ENCODE measurements at regions of chr10 and their contacts with region 1.

Region 1: GRCh38 chr10:119445311-119445934 is 97.1 kb downstream of the RGS10 start:
- DNase-seq: peak; percentile 75 to 93 (median 82)
- ATAC-seq: peak; percentile 90
- H3K4me3 ChIP-seq: no peak overlapping the region
- H3K4me3 Mint-ChIP-seq: no peak overlapping the region
- H3K27ac ChIP-seq: no peak overlapping the region
- H3K27ac Mint-ChIP-seq: no peak overlapping the region
- H3K4me1 ChIP-seq: peaks cover 9% of the 10 kb centered on the region
- H3K4me1 Mint-ChIP-seq: peaks cover 20% of the 10 kb centered on the region
- H3K27me3 ChIP-seq: no peaks in the 10 kb centered on the region
- H3K27me3 Mint-ChIP-seq: no peaks in the 10 kb centered on the region
- CTCF ChIP-seq: peak; percentile 83

Region 2: GRCh38 chr10:119139464-119140067 is 305.9 kb before region 1 on chr10:
- CTCF ChIA-PET with region 1: no interaction called
- POLR2A ChIA-PET with region 1: no interaction called
- intact Hi-C with region 1: loop called in 1 of 2 experiments (anchors 5 kb)
- DNase-seq: peak; percentile 23 to 72 (median 46)
- ATAC-seq: peak; percentile 88
- H3K4me3 ChIP-seq: no peak overlapping the region
- H3K4me3 Mint-ChIP-seq: no peak overlapping the region
- H3K27ac ChIP-seq: peak overlapping the region in 1 of 2 donors; percentile 11
- H3K27ac Mint-ChIP-seq: peak overlapping the region; percentile 1
- H3K4me1 ChIP-seq: peaks cover 7% of the 10 kb centered on the region
- H3K4me1 Mint-ChIP-seq: peaks cover 7% of the 10 kb centered on the region
- H3K27me3 ChIP-seq: no peaks in the 10 kb centered on the region
- H3K27me3 Mint-ChIP-seq: no peaks in the 10 kb centered on the region
- CTCF ChIP-seq: peak; percentile 48

Region 3: DNA sequence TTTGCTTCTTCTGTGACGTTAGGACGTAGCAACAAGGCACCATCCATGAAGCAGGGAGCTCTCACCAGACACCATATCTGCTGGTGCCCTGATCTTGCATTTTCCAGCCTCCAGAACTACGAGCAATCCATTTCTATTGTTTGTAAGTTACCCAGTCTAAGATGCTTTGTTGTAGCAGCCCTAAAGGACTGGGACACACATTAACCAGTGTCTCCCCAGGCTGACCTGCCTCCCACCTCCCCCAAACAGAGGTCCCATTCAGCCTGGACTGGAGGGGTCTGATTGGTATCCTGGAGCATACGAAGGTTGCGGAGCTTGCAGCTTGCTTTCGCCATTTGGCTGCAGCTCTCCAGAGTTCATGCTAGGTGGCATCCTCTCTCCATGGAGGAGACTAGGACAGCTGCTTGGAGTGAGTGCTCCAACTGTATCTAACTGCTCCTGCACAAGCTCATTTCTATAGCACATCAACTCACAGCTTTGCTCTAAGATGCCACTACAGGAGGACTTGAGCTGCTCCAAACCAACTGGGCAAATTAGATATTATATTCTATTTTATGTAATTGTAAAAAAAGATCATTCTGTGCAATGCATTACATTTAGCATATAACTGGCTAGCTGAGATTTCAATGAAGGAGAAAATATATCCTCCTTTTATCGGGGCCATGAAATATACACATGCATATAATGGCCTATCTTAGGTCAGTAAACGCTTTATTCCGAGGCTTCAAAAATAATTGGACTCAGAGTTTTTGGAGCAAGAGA is 246.0 kb before region 1 on chr10:
- CTCF ChIA-PET with region 1: interaction called, 46 read pairs
- POLR2A ChIA-PET with region 1: no interaction called
- intact Hi-C with region 1: loop called in 1 of 2 experiments (anchors 2 kb)
- DNase-seq: peak in 13 of 14 experiments; percentile 14 to 80 (median 45)
- ATAC-seq: peak; percentile 97
- H3K4me3 ChIP-seq: no peak overlapping the region
- H3K4me3 Mint-ChIP-seq: no peak overlapping the region
- H3K27ac ChIP-seq: no peak overlapping the region
- H3K27ac Mint-ChIP-seq: no peak overlapping the region
- H3K4me1 ChIP-seq: peaks cover 4% of the 10 kb centered on the region
- H3K4me1 Mint-ChIP-seq: peaks cover 5% of the 10 kb centered on the region
- H3K27me3 ChIP-seq: no peaks in the 10 kb centered on the region
- H3K27me3 Mint-ChIP-seq: no peaks in the 10 kb centered on the region
- CTCF ChIP-seq: peak; percentile 70

Region 4: GRCh38 chr10:119494236-119495060 is 49.0 kb after region 1 on chr10:
- CTCF ChIA-PET with region 1: interaction called, 7 read pairs
- POLR2A ChIA-PET with region 1: interaction called, 3 read pairs
- intact Hi-C with region 1: loop called in 1 of 2 experiments (anchors 2 kb)
- DNase-seq: peak in 1 of 14 experiments; percentile 23
- ATAC-seq: no peak
- H3K4me3 ChIP-seq: no peak overlapping the region
- H3K4me3 Mint-ChIP-seq: peak overlapping the region; percentile 57
- H3K27ac ChIP-seq: peak overlapping the region; percentile 33 to 57
- H3K27ac Mint-ChIP-seq: peak overlapping the region; percentile 92
- H3K4me1 ChIP-seq: peaks cover 72% of the 10 kb centered on the region
- H3K4me1 Mint-ChIP-seq: peaks cover 80% of the 10 kb centered on the region
- H3K27me3 ChIP-seq: no peaks in the 10 kb centered on the region
- H3K27me3 Mint-ChIP-seq: no peaks in the 10 kb centered on the region
- CTCF ChIP-seq: no peak

Region 5: GRCh38 chr10:119588071-119588470 is 142.6 kb after region 1 on chr10:
- CTCF ChIA-PET with region 1: no interaction called
- POLR2A ChIA-PET with region 1: no interaction called
- intact Hi-C with region 1: no loop called
- DNase-seq: no peak
- ATAC-seq: no peak
- H3K4me3 ChIP-seq: no peak overlapping the region
- H3K4me3 Mint-ChIP-seq: no peak overlapping the region
- H3K27ac ChIP-seq: no peak overlapping the region
- H3K27ac Mint-ChIP-seq: no peak overlapping the region
- H3K4me1 ChIP-seq: peaks cover 7% of the 10 kb centered on the region
- H3K4me1 Mint-ChIP-seq: peaks cover 44% of the 10 kb centered on the region
- H3K27me3 ChIP-seq: no peaks in the 10 kb centered on the region
- H3K27me3 Mint-ChIP-seq: no peaks in the 10 kb centered on the region
- CTCF ChIP-seq: no peak

Region 6: GRCh38 chr10:121216721-121217181 is 1771.3 kb after region 1 on chr10:
- CTCF ChIA-PET with region 1: no interaction called
- POLR2A ChIA-PET with region 1: no interaction called
- intact Hi-C with region 1: no loop called
- DNase-seq: no peak
- ATAC-seq: no peak
- H3K4me3 ChIP-seq: no peak overlapping the region
- H3K4me3 Mint-ChIP-seq: no peak overlapping the region
- H3K27ac ChIP-seq: no peak overlapping the region
- H3K27ac Mint-ChIP-seq: no peak overlapping the region
- H3K4me1 ChIP-seq: no peaks in the 10 kb centered on the region
- H3K4me1 Mint-ChIP-seq: no peaks in the 10 kb centered on the region
- H3K27me3 ChIP-seq: no peaks in the 10 kb centered on the region
- H3K27me3 Mint-ChIP-seq: no peaks in the 10 kb centered on the region
- CTCF ChIP-seq: no peak

Measured in CD4-positive, alpha-beta T cell (primary cell).